ENCODE measurements at regions of chr3 and their contacts with region 1.

Region 1: DNA sequence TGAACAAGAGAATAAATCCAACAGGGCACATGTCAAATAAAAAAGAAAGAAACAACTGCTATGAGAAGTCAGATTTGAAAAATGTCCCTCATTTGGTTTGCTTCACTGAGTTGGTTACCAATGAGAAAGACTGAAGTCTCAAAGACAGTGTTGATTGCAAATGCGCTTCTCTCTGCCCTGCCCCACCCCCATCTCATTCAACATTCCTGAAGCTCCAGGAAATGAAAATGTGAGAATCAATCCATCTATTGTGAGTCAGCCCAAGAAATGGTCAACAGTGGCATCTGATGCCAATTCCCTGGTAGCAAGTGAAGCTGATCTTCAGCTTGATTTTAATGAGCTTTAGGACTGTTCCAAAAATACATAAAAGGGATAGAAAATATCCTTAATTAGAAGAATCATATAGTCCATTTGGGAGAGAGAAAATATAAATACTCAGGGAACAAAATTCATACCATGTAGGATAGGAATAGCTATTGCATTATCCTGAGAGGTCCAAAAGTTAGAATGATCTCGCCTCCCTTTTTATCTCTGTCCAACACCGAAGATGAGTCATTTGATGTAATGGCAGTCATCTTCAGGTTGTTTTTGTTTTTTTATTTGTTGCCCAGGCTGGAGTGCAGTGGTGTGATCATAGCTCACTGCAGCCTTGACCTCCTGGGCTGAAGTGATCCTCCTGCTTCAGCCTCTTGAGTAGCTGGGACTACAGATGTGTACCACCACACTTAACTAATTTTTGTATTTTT is 200.3 kb upstream of the UMPS start:
- DNase-seq: no peak
- H3K4me3 ChIP-seq: no peak overlapping the region
- H3K27ac ChIP-seq: no peak overlapping the region
- H3K4me1 ChIP-seq: no peaks in the 10 kb centered on the region
- H3K27me3 ChIP-seq: peaks cover 62% of the 10 kb centered on the region
- CTCF ChIP-seq: no peak

Region 2: DNA sequence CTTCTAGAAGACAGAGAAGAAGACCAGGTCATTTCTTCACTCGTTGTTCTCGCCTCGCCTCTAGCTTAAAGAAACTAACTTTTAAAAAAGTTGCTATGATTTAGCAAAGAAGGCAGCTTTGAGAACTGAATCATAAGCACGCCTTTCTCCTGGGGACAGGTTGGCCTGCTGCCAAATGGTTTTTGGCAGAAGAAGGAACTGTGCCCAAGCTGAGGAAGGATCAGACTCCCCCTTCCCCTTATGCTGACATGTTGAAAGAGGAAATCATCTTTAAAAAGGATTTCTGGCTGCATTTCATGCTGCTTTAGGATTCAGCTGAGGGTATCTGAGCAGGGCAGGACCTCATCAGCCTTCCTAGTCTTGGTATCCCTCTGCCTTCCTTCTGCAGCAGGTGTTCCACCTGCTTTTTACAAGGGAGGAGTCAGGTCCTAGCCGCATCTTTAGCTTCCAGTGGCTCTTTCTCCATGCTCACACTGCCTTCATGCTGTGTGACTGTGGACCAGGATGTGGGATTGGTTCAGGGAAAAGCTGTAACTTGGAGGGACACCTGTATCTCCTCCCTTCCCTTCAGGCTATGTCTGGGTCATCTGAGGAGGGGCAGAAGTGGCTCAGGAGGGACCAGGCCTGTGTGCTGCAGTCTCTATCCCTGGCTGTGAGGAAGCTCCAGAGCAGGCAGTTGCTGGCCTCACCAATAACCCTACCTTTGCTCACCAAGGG is 911.1 kb before region 1 on chr3:
- CTCF ChIA-PET with region 1: no interaction called
- POLR2A ChIA-PET with region 1: interaction called, 43 read pairs
- intact Hi-C with region 1: no loop called
- DNase-seq: peak; percentile 58 to 66
- H3K4me3 ChIP-seq: no peak overlapping the region
- H3K27ac ChIP-seq: peak overlapping the region; percentile 89
- H3K4me1 ChIP-seq: peaks cover 53% of the 10 kb centered on the region
- H3K27me3 ChIP-seq: no peaks in the 10 kb centered on the region
- CTCF ChIP-seq: no peak

Region 3: GRCh38 chr3:124117486-124117885 is 412.5 kb before region 1 on chr3:
- CTCF ChIA-PET with region 1: no interaction called
- POLR2A ChIA-PET with region 1: no interaction called
- intact Hi-C with region 1: no loop called
- DNase-seq: no peak
- H3K4me3 ChIP-seq: no peak overlapping the region
- H3K27ac ChIP-seq: no peak overlapping the region
- H3K4me1 ChIP-seq: no peaks in the 10 kb centered on the region
- H3K27me3 ChIP-seq: peaks cover 67% of the 10 kb centered on the region
- CTCF ChIP-seq: no peak

Region 4: DNA sequence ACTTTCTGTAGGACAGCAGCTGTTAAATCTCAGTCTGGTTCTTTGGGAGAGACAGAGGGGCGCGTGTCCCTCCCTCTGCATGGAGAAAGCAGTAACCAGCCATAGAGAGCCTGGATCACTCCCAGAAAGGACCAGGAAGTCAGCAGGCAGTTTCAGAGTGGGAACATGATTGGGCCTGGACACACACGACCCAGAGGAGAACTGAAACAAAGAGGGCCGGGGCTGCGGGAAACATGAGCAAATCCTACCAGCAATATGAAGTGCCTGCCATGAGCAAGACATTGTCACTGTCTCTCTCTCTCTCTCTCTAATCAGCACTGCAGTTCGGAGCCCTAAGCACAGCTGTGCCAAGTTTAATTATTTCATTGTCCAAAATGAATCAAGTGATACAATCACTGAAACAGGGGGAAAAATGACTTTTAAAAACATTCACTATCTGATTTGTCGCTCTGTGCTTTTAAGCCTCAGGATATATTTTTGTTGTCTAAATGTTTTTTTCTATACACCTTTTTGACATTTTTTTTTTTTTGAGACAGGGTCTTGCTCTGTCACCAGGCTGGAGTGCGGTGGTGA is 386.9 kb after region 1 on chr3:
- CTCF ChIA-PET with region 1: no interaction called
- POLR2A ChIA-PET with region 1: no interaction called
- intact Hi-C with region 1: no loop called
- DNase-seq: no peak
- H3K4me3 ChIP-seq: no peak overlapping the region
- H3K27ac ChIP-seq: no peak overlapping the region
- H3K4me1 ChIP-seq: no peaks in the 10 kb centered on the region
- H3K27me3 ChIP-seq: no peaks in the 10 kb centered on the region; the same call in 1 of the 2 replicates
- CTCF ChIP-seq: no peak

Measured in PC-9 (cell line).